Caco-2 (cell line): ENCODE measurements at regions of chr1 and their contacts with region 1.

Region 1: DNA sequence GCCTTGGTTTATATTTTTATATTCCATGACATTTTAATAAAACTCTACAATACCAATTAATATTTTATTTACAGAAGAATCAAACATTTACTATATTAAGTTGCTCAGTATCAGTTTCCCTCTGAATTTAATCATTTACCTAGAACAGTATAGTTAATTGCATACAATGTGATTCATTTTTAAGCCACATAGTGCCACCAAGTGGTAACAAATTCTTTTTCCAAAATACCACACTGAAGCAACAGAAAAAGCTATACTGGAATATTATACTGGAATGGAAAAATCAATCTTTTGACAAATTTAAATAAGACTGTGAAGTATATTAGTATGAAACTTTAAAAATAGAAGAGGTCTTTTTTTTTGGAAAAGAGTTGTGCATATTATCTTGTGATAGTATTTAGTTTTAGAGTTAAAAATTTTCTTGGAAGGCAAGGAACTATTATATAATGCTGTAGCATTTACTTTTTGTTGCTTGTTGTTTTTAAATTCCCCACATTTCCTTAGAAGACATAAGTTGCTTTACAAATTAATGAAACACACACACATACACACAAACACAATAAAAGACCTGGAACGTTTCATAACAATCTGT is 57.3 kb downstream of the ZNF644 start:
- DNase-seq: no peak
- H3K4me3 ChIP-seq: no peak overlapping the region
- H3K4me3 Mint-ChIP-seq: no peak overlapping the region
- H3K27ac Mint-ChIP-seq: no peak overlapping the region
- H3K4me1 ChIP-seq: peaks cover 5% of the 10 kb centered on the region; the same call in 1 of the 2 replicates
- H3K4me1 Mint-ChIP-seq: no peaks in the 10 kb centered on the region
- H3K27me3 ChIP-seq: no peaks in the 10 kb centered on the region
- H3K27me3 Mint-ChIP-seq: no peaks in the 10 kb centered on the region
- CTCF ChIP-seq: peak; percentile 6 to 34

Region 2: DNA sequence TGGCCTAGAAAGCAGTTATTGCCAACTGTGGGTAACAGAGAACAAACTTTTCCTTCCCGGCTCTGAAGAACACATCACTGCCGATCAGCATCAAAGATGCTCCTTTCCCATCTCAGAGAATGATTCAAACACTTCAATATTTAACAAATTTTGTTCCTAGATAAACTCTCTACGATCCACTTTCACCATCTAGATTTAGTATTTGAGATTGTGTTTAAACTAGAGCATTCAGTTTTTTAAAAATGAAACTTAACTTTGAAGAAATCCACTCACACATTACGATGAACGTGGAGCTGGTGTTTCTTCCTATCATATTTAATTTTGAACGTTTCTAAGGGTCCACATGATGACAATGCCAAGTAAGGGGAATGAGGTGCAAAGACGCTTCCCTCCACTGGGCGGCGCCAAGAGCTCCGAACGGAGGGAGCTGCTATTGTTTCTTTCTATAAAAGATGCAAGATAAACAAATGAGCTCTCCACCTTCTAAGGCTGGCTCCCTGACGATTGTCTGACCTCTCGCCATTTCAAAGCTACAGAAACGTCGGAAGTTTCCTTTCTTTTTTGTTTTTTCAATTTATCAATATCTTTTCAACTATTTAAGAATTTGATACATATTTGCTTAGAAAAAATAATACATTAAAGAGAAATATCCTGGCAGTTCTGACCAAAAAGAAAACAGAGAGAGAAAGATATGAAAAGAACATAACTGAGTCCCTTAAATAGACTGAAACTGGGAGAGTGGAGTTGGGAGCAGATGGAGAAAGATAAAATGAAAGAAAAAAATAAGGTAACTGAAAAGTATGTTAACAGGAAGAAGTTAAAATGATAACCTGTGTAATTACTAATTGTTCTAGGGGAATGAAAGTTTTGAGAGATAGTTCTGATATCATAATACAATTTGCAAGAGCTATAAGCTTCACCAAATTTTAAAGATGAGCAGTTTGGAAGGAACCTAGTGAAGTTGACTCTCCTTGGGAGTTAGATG is 243.0 kb before region 1 on chr1:
- CTCF ChIA-PET with region 1: interaction called, 3 read pairs
- POLR2A ChIA-PET with region 1: no interaction called
- intact Hi-C with region 1: loop called (anchors 1 kb)
- DNase-seq: peak in 1 of 2 experiments; percentile 57
- H3K4me3 ChIP-seq: no peak overlapping the region
- H3K4me3 Mint-ChIP-seq: no peak overlapping the region
- H3K27ac Mint-ChIP-seq: no peak overlapping the region
- H3K4me1 ChIP-seq: no peaks in the 10 kb centered on the region
- H3K4me1 Mint-ChIP-seq: no peaks in the 10 kb centered on the region
- H3K27me3 ChIP-seq: no peaks in the 10 kb centered on the region
- H3K27me3 Mint-ChIP-seq: peaks cover 5% of the 10 kb centered on the region
- CTCF ChIP-seq: peak; percentile 55 to 68

Region 3: DNA sequence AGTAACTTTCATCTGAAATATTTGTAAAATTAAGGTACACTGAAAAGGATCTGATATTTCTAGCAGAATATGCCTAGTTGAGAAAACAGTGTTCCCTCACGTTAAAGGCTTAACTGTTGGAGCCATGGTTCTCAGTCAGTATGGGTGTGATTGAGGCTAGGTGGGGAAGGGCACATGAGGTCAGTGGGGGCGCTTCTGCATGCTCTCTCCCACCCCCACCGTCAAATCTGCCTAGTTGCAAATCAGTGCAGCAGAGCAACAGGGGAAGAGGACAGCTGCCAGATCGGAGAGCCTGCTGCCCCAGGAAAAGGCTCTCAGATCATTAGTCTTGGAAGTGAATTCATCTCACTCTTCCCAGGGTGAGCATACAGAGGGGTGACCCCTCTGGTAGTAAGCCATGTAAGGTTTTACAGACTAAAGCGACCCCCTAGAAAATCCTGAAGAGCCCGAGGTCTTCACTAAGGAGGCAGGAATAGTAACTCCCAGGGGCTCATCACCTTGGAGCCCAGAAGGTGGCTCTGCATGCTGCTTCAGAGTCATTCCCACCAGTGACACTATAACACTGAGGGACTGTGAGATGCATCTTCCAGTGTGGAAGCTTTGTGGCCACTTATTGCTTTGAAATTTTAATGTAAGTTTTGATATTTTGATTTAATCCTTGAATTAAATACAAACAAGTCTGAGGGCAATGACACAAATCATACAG is 164.4 kb before region 1 on chr1:
- CTCF ChIA-PET with region 1: no interaction called
- POLR2A ChIA-PET with region 1: no interaction called
- intact Hi-C with region 1: loop called (anchors 1 kb)
- DNase-seq: peak in 1 of 2 experiments; percentile 1
- H3K4me3 ChIP-seq: no peak overlapping the region
- H3K4me3 Mint-ChIP-seq: no peak overlapping the region
- H3K27ac Mint-ChIP-seq: no peak overlapping the region
- H3K4me1 ChIP-seq: no peaks in the 10 kb centered on the region
- H3K4me1 Mint-ChIP-seq: no peaks in the 10 kb centered on the region
- H3K27me3 ChIP-seq: no peaks in the 10 kb centered on the region
- H3K27me3 Mint-ChIP-seq: peaks cover 5% of the 10 kb centered on the region
- CTCF ChIP-seq: no peak

Region 4: DNA sequence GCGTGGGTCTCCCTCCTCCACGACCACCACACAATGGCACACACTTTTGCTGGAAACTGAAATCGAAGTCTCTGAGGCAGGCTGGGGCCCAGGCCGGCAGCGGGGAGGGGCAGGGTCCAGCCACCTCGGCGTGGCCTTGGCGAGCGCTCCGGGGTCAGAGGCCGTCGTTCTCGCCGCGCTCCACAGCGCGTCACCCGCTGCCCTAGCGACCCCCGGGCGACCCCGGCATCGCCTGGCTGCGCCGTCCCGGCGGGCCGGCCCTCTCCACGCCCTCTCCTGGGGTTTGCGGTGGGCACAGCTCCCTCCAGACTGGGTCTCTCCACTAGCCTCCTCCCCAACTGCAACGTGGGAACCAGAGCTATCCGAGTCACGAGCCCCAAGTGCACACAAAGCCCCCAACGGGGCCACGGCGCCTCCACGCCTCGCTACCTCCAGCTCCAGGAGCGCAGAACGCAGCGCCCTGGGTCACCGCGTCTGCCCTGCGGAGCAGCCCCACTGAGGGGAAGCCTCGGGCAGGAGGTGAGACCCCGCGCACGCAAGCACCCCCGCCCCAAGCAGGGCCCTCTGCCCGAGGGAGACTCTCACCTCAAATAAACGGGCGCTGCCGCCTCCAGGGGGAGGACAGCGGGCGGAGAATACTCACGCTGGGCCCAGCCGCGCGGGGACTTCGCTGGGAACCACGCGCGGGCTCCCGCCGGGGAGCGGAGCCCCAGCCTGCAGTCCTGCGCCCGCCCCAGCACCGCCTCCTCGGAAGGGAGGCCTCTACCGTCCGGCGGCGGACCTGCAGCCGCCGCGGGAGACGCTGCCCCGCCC is 113.4 kb before region 1 on chr1:
- CTCF ChIA-PET with region 1: no interaction called
- POLR2A ChIA-PET with region 1: no interaction called
- intact Hi-C with region 1: loop called (anchors 2 kb)
- DNase-seq: peak; percentile 70 to 76
- H3K4me3 ChIP-seq: peak overlapping the region; percentile 87
- H3K4me3 Mint-ChIP-seq: peak overlapping the region; percentile 77
- H3K27ac Mint-ChIP-seq: no peak overlapping the region
- H3K4me1 ChIP-seq: no peaks in the 10 kb centered on the region
- H3K4me1 Mint-ChIP-seq: no peaks in the 10 kb centered on the region
- H3K27me3 ChIP-seq: no peaks in the 10 kb centered on the region
- H3K27me3 Mint-ChIP-seq: no peaks in the 10 kb centered on the region
- CTCF ChIP-seq: peak; percentile 45 to 54